ENCODE measurements at regions of chr4 and their contacts with region 1.

Region 1: GRCh38 chr4:145061318-145061920 is 36.6 kb downstream of the ANAPC10 start:
- DNase-seq: peak; percentile 19
- CTCF ChIP-seq: peak; percentile 30

Region 2: GRCh38 chr4:144174401-144175067 is 886.9 kb before region 1 on chr4:
- in situ Hi-C with region 1: loop called (anchors 10 kb)
- DNase-seq: peak; percentile 36
- CTCF ChIP-seq: peak; percentile 48

Region 3: GRCh38 chr4:144611846-144612245 is 449.6 kb before region 1 on chr4:
- in situ Hi-C with region 1: loop called (anchors 25 kb)
- DNase-seq: peak; percentile 44
- CTCF ChIP-seq: peak; percentile 44

Region 4: GRCh38 chr4:144787365-144788258 is 273.8 kb before region 1 on chr4:
- in situ Hi-C with region 1: loop called (anchors 25 kb)
- DNase-seq: peak; percentile 33
- CTCF ChIP-seq: peak; percentile 59

Region 5: GRCh38 chr4:144906181-144906925 is 155.1 kb before region 1 on chr4:
- in situ Hi-C with region 1: no loop called
- DNase-seq: no peak
- CTCF ChIP-seq: no peak

Region 6: DNA sequence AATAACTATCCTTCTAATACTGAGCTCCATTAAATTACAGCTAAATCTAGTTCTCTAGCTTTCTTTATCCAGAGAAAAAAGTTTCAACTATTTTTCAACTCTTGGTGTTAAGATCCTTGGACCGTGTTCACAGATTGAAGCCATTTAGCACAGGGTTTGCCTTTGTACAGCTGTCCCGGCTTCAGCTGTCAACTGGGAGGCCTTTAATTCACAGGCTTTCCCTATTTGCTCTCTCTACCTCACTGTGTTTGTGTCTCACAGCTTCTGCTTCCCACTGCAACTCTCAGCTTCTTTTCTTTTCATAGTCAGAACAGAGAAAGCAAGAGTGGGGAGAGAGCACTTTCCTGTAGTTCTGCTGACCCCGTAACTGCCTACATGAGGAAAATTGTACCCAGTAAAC is 343.3 kb after region 1 on chr4:
- in situ Hi-C with region 1: no loop called
- DNase-seq: no peak
- CTCF ChIP-seq: no peak

Region 7: DNA sequence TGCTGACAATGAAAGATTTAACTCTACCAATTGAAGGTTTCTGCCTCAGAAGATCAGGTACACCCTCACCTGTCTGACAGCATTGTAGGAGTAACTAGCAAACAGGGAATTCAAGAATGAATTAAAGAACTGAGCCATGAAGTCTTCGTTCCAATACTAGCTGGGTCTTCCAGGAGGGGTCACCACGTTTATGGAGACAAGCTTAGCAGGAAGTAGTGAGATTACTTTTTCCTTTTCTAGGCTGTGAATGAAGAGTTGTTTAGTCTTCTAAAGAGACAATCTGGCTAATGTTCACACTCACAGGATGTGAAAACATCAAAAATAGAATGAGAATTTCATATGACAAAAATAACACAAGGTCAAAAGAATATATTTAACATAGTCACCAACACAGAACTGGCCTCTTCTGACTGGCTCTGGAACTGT is 1207.8 kb after region 1 on chr4:
- in situ Hi-C with region 1: no loop called
- DNase-seq: no peak
- CTCF ChIP-seq: peak; percentile 21